Calu3 (cell line): ENCODE measurements at regions of chr3 and their contacts with region 1.

Region 1: GRCh38 chr3:15803913-15804312 is 6.1 kb upstream of the ANKRD28 start:
- DNase-seq: no peak
- H3K4me3 Mint-ChIP-seq: no peak overlapping the region
- H3K27ac Mint-ChIP-seq: no peak overlapping the region
- H3K4me1 Mint-ChIP-seq: peaks cover 53% of the 10 kb centered on the region
- H3K27me3 Mint-ChIP-seq: no peaks in the 10 kb centered on the region
- CTCF ChIP-seq: no peak

Region 2: GRCh38 chr3:15629860-15630597 is 173.9 kb before region 1 on chr3:
- CTCF ChIA-PET with region 1: no interaction called
- intact Hi-C with region 1: loop called (anchors 2 kb)
- DNase-seq: peak; percentile 58
- H3K4me3 Mint-ChIP-seq: no peak overlapping the region
- H3K27ac Mint-ChIP-seq: peak overlapping the region; percentile 34
- H3K4me1 Mint-ChIP-seq: peaks cover 9% of the 10 kb centered on the region
- H3K27me3 Mint-ChIP-seq: no peaks in the 10 kb centered on the region
- CTCF ChIP-seq: no peak

Region 3: DNA sequence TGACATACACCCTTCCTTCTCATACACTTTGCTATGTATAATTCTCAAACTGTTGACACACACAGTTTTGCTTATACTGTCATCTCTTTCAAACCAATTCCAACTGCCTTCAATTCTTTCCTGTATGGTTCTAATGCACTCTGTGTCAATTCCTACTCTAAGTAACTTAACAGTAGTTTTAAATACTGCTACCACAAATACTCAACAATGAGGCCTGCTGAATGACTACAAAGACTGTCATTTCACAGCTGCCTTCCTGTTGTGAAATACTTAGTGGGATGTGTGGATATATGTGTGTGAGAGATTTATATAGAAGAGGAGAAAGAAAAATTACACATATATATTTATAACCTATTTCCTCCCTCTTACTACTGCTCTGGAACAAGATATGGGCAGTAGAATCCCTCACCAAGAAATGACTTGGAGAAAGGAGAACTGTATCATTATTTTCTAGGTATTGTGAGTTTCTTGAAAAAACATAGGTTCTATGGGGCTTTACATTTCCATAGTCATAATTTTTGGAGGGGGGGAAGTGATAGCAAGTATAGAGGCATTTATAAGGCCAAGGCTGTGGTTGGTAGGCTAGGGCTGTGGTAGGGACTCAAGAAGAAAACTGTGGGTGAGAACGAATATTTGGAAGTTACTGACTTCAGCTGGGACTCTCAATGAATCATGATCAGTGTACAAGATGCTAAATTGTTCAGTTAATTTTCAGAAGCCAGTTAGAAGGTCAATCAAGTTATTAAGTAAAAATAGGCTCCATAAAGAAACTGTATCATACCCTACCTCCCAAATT is 94.8 kb before region 1 on chr3:
- CTCF ChIA-PET with region 1: no interaction called
- intact Hi-C with region 1: no loop called
- DNase-seq: no peak
- H3K4me3 Mint-ChIP-seq: no peak overlapping the region
- H3K27ac Mint-ChIP-seq: no peak overlapping the region
- H3K4me1 Mint-ChIP-seq: no peaks in the 10 kb centered on the region
- H3K27me3 Mint-ChIP-seq: no peaks in the 10 kb centered on the region
- CTCF ChIP-seq: no peak